ENCODE measurements at regions of chr1 and their contacts with region 1.

Region 1: GRCh38 chr1:26126321-26127084 is 14.9 kb downstream of the PDIK1L start:
- DNase-seq: peak; percentile 92 to 99 (median 97)
- H3K4me3 ChIP-seq: peak overlapping the region in 5 of 7 experiments; percentile 27 to 71 (median 48)
- H3K27ac ChIP-seq: peak overlapping the region; percentile 93 to 97
- H3K4me1 ChIP-seq: peaks cover 45 to 83% (median 64%) of the 10 kb centered on the region in 4 experiments
- H3K27me3 ChIP-seq: no peaks in the 10 kb centered on the region

Region 2: DNA sequence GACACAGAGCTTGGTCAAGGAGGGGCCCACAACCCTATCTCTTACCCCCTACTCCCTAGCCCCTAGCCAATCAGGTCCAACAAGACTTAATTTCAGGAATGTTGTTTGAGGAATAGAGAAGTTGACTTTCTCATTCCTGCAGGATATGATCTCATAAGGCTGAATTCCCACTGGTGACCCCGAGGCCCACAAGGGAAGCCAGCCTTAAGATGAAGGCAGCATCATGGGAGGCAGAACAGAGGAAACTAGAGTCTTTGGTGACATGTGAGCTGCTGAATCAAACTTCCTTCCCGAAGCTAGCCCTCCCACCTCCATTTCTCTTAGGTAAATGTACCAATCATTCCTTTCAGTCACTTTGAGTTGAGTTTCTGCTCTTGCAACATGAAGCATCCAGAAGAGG is 24.0 kb before region 1 on chr1:
- CTCF ChIA-PET with region 1: interaction called, 10 read pairs
- POLR2A ChIA-PET with region 1: interaction called, 3 read pairs
- DNase-seq: no peak
- H3K4me3 ChIP-seq: no peak overlapping the region
- H3K27ac ChIP-seq: no peak overlapping the region
- H3K4me1 ChIP-seq: peaks cover 0 to 6% (median 0%) of the 10 kb centered on the region in 4 experiments
- H3K27me3 ChIP-seq: peaks cover 0 to 5% (median 3%) of the 10 kb centered on the region in 5 experiments

Region 3: GRCh38 chr1:26111530-26112406 is 14.7 kb before region 1 on chr1 and contains the start of gene PDIK1L:
- CTCF ChIA-PET with region 1: interaction called, 34 read pairs
- POLR2A ChIA-PET with region 1: interaction called, 14 read pairs
- DNase-seq: peak; percentile 96 to 99 (median 99)
- H3K4me3 ChIP-seq: peak within 1 kb of the TSS; percentile 44 to 99 (median 91)
- H3K27ac ChIP-seq: peak within 1 kb of the TSS; percentile 68 to 87
- H3K4me1 ChIP-seq: peaks cover 8 to 24% (median 20%) of the 10 kb centered on the region in 4 experiments
- H3K27me3 ChIP-seq: no peaks in the 10 kb centered on the region

Region 4: DNA sequence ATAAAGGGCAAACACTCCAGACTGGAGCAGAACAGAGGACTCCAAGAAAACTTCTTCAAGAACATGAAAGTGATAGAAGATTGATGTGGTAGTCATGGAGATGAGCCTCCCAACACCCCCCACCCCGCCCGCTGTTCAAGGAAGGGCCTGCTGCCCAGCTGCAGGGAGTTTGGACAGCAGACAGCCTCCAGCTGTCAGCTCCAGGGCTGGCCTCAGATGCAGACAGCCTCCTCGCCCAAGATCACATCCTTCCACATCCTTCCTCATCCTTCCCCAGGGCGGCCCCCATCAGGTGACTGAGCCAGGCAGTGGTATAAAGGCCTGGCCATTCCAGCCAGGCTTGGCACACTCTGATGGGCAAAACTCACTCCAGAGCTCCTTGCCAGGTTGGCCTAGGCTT is 370.4 kb after region 1 on chr1:
- CTCF ChIA-PET with region 1: no interaction called
- POLR2A ChIA-PET with region 1: no interaction called
- DNase-seq: peak in 1 of 3 donors; percentile 7
- H3K4me3 ChIP-seq: no peak overlapping the region
- H3K27ac ChIP-seq: no peak overlapping the region
- H3K4me1 ChIP-seq: peaks cover 0 to 27% (median 25%) of the 10 kb centered on the region in 4 experiments
- H3K27me3 ChIP-seq: no peaks in the 10 kb centered on the region